ENCODE measurements at regions of chr1 and their contacts with region 1.

Region 1: DNA sequence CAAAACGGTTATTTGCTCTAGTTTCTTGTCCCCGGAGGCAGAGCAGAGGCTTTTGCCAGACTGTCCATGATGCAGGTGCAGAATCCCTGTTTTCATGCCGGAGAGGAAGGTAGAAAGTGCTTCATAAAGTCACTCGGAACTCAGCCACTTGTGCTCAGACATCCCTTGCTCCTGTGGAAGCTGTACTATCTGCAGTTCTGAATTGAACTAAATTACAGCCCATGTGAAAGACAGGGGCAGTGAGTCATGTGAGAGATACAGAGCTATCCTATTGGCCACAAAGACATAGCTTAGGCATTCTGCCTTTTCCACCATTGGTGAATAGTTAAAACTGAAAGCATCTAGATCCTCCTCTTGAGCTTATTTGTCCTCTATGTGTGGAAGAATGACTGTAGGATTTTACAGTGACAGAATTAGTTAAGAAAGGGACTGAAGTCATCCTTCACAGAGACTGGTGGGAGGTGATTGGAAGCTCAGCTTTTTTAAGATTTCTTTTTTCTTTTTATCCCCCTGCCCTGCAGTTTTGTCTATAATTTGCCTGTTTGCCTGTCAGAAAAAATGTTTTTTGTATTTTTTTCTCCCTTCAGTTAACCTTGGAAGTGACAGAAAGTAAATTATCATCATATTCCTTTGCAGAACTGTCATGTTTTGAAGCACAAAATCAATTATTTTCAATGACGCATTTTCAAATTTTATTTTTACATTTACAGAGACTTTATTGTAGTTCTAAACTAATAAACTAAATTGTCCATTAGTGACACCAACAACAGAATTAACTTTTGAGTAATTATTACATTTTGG is 298.6 kb downstream of the PTPRC start:
- DNase-seq: peak; percentile 66
- H3K4me3 Mint-ChIP-seq: no peak overlapping the region
- H3K27ac Mint-ChIP-seq: peak overlapping the region; percentile 93
- H3K4me1 Mint-ChIP-seq: peaks cover 30% of the 10 kb centered on the region
- H3K27me3 Mint-ChIP-seq: no peaks in the 10 kb centered on the region

Region 2: DNA sequence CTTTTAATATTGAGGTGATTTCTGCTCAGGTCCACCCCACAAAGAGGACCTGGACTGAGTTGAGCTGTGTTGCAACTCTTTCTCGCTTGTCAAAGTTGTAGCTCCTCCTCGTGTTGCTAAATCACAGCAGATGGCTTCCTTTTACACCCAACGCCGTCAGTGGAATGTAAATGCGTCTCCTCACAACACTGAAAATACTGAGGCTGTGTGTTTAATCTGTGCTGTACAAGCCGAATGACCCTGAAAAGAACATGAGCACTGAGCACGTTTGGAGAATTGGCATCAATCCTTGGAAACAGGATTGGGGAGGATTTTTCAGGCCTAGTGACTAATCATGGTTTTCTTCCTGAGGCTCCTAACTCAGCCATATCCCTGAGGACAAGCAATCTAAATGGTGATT is 1473.4 kb before region 1 on chr1:
- intact Hi-C with region 1: no loop called
- DNase-seq: no peak
- H3K4me3 Mint-ChIP-seq: no peak overlapping the region
- H3K27ac Mint-ChIP-seq: no peak overlapping the region
- H3K4me1 Mint-ChIP-seq: peaks cover 3% of the 10 kb centered on the region
- H3K27me3 Mint-ChIP-seq: peaks cover 9% of the 10 kb centered on the region

Region 3: DNA sequence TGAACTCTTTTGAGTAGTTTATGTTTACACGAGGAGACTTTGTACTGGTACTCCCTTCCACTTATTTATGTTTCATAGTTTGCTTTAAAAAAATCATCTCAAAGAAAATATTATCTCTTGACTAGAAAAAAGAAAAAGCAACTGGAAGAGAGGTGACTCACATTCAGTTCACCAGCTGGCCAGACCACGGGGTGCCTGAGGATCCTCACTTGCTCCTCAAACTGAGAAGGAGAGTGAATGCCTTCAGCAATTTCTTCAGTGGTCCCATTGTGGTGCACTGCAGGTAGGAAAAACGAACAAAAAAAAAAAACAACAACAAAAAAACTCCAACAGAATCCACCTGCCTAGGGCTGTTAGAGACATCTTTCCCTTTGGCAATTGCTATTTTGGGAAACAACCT is 195.7 kb before region 1 on chr1:
- intact Hi-C with region 1: no loop called
- DNase-seq: no peak
- H3K4me3 Mint-ChIP-seq: no peak overlapping the region
- H3K27ac Mint-ChIP-seq: no peak overlapping the region
- H3K4me1 Mint-ChIP-seq: peaks cover 39% of the 10 kb centered on the region
- H3K27me3 Mint-ChIP-seq: no peaks in the 10 kb centered on the region

Region 4: DNA sequence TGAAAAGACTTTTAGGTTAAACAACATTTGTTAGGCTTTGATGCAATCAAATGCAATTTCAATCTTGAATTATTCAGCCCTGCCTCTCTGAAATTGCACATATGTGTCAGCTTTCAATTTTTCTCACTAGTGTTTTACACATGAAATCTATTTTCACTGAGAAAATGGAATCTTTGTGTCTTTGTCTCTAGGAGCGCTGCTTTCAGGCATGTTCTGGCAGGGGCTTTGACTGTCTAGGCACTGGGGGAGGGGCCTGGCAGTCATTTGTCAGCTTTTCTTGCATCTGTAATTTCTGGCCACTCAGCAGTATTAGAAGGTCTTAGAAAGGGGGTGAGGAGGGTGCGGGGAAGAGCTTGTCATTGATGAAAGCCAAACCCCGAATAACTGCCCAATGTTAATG is 34.2 kb before region 1 on chr1:
- intact Hi-C with region 1: no loop called
- DNase-seq: no peak
- H3K4me3 Mint-ChIP-seq: no peak overlapping the region
- H3K27ac Mint-ChIP-seq: no peak overlapping the region
- H3K4me1 Mint-ChIP-seq: peaks cover 46% of the 10 kb centered on the region
- H3K27me3 Mint-ChIP-seq: no peaks in the 10 kb centered on the region

Region 5: GRCh38 chr1:198922638-198923430 is 14.6 kb before region 1 on chr1:
- intact Hi-C with region 1: loop called (anchors 1 kb)
- DNase-seq: no peak
- H3K4me3 Mint-ChIP-seq: peak overlapping the region; percentile 55
- H3K27ac Mint-ChIP-seq: peak overlapping the region; percentile 71
- H3K4me1 Mint-ChIP-seq: peaks cover 73% of the 10 kb centered on the region
- H3K27me3 Mint-ChIP-seq: no peaks in the 10 kb centered on the region

Region 6: GRCh38 chr1:199009447-199009846 is 72.0 kb after region 1 on chr1:
- intact Hi-C with region 1: loop called (anchors 2 kb)
- DNase-seq: no peak
- H3K4me3 Mint-ChIP-seq: peak overlapping the region; percentile 35
- H3K27ac Mint-ChIP-seq: peak overlapping the region; percentile 64
- H3K4me1 Mint-ChIP-seq: peaks cover 47% of the 10 kb centered on the region
- H3K27me3 Mint-ChIP-seq: no peaks in the 10 kb centered on the region

Region 7: DNA sequence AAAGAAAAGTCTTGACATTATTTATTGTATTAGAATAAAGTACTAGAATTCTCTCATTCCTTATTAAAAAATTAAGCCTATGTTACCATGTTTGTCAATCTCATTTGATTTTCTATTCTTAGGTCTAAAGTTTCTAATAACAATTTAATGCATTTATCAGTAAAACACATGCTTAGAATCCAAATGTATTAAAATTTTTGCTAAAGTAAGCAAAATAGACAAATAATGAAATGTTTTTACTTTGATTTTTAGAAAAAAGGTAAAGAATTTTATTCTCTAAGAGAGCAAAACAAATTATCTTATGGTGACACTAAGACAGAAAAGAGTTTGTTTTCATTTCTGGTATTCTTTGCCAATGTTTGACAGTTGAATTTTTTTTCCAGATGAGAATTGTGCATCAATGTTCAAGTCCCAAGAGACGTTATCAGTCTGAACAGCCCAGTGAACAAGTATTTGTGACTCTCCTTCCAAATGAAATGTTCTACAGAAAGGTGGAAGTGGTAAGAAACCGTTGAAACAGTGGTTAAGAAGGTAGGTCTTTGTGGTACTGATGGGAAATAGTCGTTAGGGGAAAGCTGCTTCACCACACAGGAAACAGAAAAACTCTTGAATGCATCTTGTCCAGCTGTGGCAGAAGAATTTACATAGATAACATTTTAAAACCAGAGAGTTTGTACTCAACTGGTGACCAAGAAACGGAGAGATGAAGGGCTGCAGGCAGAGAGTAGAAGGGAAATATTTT is 103.9 kb after region 1 on chr1:
- intact Hi-C with region 1: loop called (anchors 1 kb)
- DNase-seq: peak; percentile 57
- H3K4me3 Mint-ChIP-seq: peak overlapping the region; percentile 51
- H3K27ac Mint-ChIP-seq: peak overlapping the region; percentile 71
- H3K4me1 Mint-ChIP-seq: peaks cover 44% of the 10 kb centered on the region
- H3K27me3 Mint-ChIP-seq: no peaks in the 10 kb centered on the region

Region 8: DNA sequence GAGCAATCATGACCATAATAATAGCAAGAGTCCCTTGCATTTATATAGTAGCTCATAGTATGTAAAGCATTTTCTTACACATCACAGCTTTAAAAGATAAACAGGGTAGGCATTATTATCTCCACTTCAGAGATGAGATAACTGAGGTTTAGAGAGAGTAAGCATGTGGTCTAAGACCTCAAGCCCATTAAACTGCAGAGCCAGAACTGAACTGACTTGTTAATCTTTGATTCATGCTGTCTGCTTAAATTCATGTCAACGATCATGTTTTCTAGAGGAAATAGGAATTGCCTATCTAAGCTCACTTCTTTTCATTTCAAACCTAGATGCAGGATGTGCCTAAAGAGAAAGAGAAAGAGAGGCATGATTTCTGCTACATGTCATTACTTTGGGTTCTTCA is 226.2 kb after region 1 on chr1:
- intact Hi-C with region 1: loop called (anchors 2 kb)
- DNase-seq: no peak
- H3K4me3 Mint-ChIP-seq: peak overlapping the region; percentile 23
- H3K27ac Mint-ChIP-seq: no peak overlapping the region
- H3K4me1 Mint-ChIP-seq: peaks cover 42% of the 10 kb centered on the region
- H3K27me3 Mint-ChIP-seq: peaks cover 3% of the 10 kb centered on the region

Region 9: GRCh38 chr1:199226163-199226562 is 288.7 kb after region 1 on chr1:
- intact Hi-C with region 1: loop called (anchors 5 kb)
- DNase-seq: no peak
- H3K4me3 Mint-ChIP-seq: peak overlapping the region; percentile 6
- H3K27ac Mint-ChIP-seq: peak overlapping the region; percentile 1
- H3K4me1 Mint-ChIP-seq: peaks cover 18% of the 10 kb centered on the region
- H3K27me3 Mint-ChIP-seq: peaks cover 3% of the 10 kb centered on the region

Measured in activated T-helper 2 cell treated with anti-CD3 and anti-CD28 coated beads, Interferon-gamma antibody, Interleukin-2, Interleukin-4, amounts not matched to agents 10 μg/mL and 5 μg/mL and 100 μg/mL, durations not matched to agents 14 hours and 24 hours and 36 hours (primary cell).